ENCODE measurements at regions of chr7 and their contacts with region 1.

Region 1: GRCh38 chr7:55018361-55019190 is at the start of gene EGFR:
- DNase-seq: peak; percentile 67 to 72
- ATAC-seq: peak; percentile 57 to 58
- H3K4me3 ChIP-seq: peak within 1 kb of the TSS; percentile 71 to 86 (median 74)
- H3K27ac ChIP-seq: peak within 1 kb of the TSS; percentile 90 to 95 (median 91)
- H3K4me1 ChIP-seq: no peaks in the 10 kb centered on the region
- H3K27me3 ChIP-seq: peaks cover 0 to 8% (median 5%) of the 10 kb centered on the region in 3 donors
- CTCF ChIP-seq: peak in 1 of 5 experiments; percentile 11
- POLR2A ChIP-seq: peak; percentile 80 to 88
- total RNA-seq, gene EGFR: 28.0 to 34.8 (median 29.4) TPM

Region 2: GRCh38 chr7:54788664-54789063 is 229.9 kb before region 1 on chr7:
- in situ Hi-C with region 1: loop called in 1 of 4 experiments (anchors 25 kb)
- intact Hi-C with region 1: loop called (anchors 5 kb)
- DNase-seq: peak in 1 of 2 donors; percentile 51
- ATAC-seq: peak; percentile 91 to 98
- H3K4me3 ChIP-seq: no peak overlapping the region
- H3K27ac ChIP-seq: no peak overlapping the region
- H3K4me1 ChIP-seq: peaks cover 2 to 7% of the 10 kb centered on the region in 2 donors
- H3K27me3 ChIP-seq: no peaks in the 10 kb centered on the region
- CTCF ChIP-seq: peak; percentile 32 to 68 (median 55)
- POLR2A ChIP-seq: no peak

Region 3: DNA sequence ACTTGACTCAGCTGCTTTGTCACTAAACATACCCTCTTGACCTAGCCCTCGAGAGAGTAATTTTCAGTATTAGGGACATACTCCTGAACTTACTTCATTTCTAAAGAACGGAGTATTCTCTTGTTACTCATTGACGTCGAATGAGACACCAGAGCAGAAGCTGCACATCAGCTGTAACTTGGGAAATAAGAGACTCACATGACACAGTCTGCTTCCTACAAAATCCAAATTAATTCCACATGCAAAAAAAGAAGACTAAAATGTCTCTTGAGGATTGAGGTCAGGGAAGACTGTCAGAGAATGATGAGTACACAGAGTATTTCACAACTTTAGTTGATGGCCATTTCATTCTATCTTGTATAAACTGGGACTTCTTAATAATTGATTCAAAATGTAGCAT is 114.4 kb before region 1 on chr7:
- in situ Hi-C with region 1: loop called in 1 of 4 experiments (anchors 10 kb)
- intact Hi-C with region 1: no loop called
- DNase-seq: peak in 1 of 2 donors; percentile 32
- ATAC-seq: peak; percentile 95 to 98
- H3K4me3 ChIP-seq: no peak overlapping the region
- H3K27ac ChIP-seq: peak overlapping the region; percentile 42 to 58 (median 50)
- H3K4me1 ChIP-seq: peaks cover 0 to 3% of the 10 kb centered on the region in 2 donors
- H3K27me3 ChIP-seq: no peaks in the 10 kb centered on the region
- CTCF ChIP-seq: no peak
- POLR2A ChIP-seq: no peak

Region 4: DNA sequence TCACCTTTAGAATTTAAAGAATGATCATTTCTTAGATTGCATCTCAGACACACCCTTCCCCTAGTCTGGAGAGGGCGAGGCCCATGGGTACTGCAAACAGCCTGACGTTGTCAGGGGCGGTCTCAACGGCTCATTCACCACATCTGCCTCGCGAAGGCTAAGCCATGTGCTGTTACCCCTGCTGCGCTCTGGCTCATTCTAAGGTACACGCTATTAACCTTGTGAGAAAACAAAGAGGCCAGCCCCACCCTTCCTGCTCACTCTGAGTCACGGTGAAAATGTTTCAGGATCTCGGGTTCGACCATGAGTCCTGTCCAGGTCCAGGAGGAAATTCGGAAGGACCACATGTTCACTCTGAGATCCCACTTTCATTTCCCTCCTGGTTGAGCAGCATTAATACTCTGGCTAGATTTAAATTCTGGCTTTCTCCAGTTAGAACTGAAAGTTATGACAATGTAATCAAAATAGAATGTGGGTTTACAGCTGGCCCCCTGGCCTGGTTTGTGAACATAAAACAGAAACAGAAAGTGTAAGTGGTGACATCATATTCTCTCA is 55.4 kb after region 1 on chr7:
- in situ Hi-C with region 1: no loop called
- intact Hi-C with region 1: loop called (anchors 2 kb)
- DNase-seq: peak in 1 of 2 donors; percentile 60
- ATAC-seq: peak in 1 of 2 donors; percentile 14
- H3K4me3 ChIP-seq: no peak overlapping the region
- H3K27ac ChIP-seq: peak overlapping the region; percentile 72 to 84 (median 79)
- H3K4me1 ChIP-seq: peaks cover 42 to 52% of the 10 kb centered on the region in 2 donors
- H3K27me3 ChIP-seq: no peaks in the 10 kb centered on the region
- CTCF ChIP-seq: no peak
- POLR2A ChIP-seq: peak in 1 of 2 donors; percentile 28

Region 5: DNA sequence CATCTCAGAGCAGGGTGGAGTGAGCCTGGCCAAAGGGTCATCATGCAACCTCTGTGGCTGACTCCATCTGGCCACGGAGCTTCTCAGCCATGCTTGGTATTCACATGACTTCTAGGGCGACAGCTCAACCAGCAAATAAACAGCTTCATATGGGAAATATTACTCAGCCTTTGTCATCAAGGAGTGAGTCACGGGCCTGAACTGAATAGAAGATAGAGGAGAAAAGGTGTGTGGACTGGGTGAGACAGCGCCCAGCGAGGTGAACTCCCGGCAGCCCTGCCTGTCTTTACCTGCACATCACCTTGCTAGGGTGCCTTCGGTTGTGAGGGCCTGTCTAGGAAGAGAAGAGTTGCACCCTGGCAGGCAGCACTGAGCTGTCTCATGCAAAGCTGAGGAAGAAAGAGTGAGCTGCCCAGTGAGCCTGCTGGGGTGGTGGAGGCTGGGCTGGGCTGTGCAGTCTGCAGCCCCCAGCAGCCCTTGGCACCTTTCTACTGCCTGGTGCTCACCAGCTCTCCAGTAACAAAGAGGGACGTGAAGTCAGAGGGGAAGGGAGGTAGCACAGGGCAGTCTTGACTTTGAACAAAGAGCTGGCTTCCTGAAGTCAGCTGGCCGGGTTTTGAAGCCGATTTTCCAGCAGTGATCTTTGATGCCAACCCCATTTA is 114.4 kb after region 1 on chr7:
- in situ Hi-C with region 1: no loop called
- intact Hi-C with region 1: loop called (anchors 2 kb)
- DNase-seq: peak; percentile 57 to 70
- ATAC-seq: peak; percentile 49 to 68
- H3K4me3 ChIP-seq: no peak overlapping the region
- H3K27ac ChIP-seq: peak overlapping the region; percentile 80 to 83 (median 82)
- H3K4me1 ChIP-seq: peaks cover 46 to 65% of the 10 kb centered on the region in 2 donors
- H3K27me3 ChIP-seq: no peaks in the 10 kb centered on the region
- CTCF ChIP-seq: no peak
- POLR2A ChIP-seq: no peak